Dendritic cell treated with granulocyte-macrophage colony-stimulating factor and Interleukin-4, amounts not matched to agents 40 ng/mL and 50 ng/mL, for 4 days (primary cell): ENCODE measurements at regions of chr9 and their contacts with region 1.

Region 1: GRCh38 chr9:98993570-98993945 is 49.9 kb downstream of the COL15A1 start:
- H3K4me3 Mint-ChIP-seq: peak overlapping the region; percentile 61
- H3K27ac Mint-ChIP-seq: peak overlapping the region; percentile 75
- H3K4me1 Mint-ChIP-seq: peaks cover 45% of the 10 kb centered on the region
- H3K27me3 Mint-ChIP-seq: peaks cover 76% of the 10 kb centered on the region

Region 2: DNA sequence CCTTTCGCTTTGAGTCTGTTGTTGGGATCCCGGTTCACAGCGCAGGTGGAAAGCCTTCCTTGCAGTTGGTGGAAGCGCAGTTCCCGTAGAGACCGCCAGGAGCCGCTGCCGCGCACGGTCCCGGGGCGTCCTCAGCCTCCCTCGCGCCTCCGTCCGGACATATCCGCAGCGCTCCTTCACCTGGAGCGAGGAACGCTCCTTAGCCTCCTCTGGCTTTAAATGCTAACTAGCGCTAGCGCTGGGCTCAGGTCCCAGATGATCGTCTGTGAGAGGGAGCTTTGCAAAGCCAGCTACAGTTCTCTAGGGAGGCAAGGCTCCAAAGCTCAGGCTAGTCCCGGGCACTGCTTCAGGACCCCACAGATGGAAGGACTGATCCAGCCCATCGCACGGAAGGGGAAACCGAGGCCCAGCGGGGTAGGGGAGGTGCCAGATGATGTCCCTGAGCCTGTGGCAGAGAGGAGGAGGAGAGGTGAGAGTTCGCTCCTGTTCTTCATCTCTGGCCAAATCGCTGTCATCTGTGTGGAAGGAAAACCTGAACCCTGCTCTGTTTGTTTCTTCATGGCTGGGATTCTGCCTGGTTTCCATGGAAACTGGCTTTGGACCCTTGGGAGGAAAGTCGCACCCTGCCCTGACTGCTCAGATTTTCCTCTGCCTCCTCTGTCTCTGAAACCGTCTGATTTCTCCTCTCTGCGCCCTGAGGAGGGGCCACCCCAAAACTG is 18.4 kb before region 1 on chr9:
- intact Hi-C with region 1: loop called (anchors 2 kb)
- H3K4me3 Mint-ChIP-seq: no peak overlapping the region
- H3K27ac Mint-ChIP-seq: no peak overlapping the region
- H3K4me1 Mint-ChIP-seq: no peaks in the 10 kb centered on the region
- H3K27me3 Mint-ChIP-seq: peaks cover 53% of the 10 kb centered on the region

Region 3: GRCh38 chr9:99057665-99058625 is 64.4 kb after region 1 on chr9:
- intact Hi-C with region 1: loop called (anchors 2 kb)
- H3K4me3 Mint-ChIP-seq: peak overlapping the region; percentile 55
- H3K27ac Mint-ChIP-seq: peak overlapping the region; percentile 93
- H3K4me1 Mint-ChIP-seq: peaks cover 67% of the 10 kb centered on the region
- H3K27me3 Mint-ChIP-seq: peaks cover 22% of the 10 kb centered on the region